ENCODE measurements at regions of chr1 and their contacts with region 1.

Region 1: DNA sequence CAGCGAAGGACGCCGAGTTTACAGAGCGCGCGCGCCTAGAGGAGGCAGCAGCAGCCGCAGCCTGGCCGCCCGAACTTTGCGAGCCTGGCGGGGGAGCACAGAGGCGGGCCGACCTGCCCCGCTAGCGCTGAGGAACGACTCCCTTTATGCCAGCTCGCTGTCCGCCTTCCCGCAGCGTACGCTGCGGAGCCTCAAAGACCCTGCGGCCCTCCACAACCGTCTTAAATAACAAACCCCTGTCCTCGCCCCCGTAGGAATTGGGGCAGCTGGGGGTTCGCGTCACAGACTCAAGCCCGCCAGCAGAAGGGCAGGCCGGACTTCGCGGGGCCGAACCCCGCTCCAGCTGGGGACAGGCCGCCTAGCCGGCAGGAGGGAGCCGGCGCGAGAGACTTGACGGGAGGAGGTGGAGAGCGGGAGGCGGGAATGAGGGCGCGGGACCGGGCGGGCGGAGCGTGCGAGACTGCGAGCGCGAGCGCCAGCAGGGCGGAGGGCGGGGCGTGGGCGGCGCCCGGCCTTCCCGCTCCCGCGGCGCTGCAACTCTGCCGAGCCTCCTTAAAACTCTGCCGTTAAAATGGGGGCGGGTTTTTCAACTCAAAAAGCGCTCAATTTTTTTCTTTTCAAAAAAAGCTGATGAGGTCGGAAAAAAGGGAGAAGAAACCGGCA is 1.8 kb upstream of the CDKN2C start:
- DNase-seq: peak; percentile 94
- H3K4me3 ChIP-seq: peak overlapping the region; percentile 62 to 90 (median 73)
- H3K27ac ChIP-seq: peak overlapping the region; percentile 66
- H3K4me1 ChIP-seq: peaks cover 26% of the 10 kb centered on the region
- H3K27me3 ChIP-seq: no peaks in the 10 kb centered on the region
- CTCF ChIP-seq: peak; percentile 30 to 53
- POLR2A ChIP-seq: peak; percentile 47

Region 2: GRCh38 chr1:50873458-50874187 is 94.7 kb before region 1 on chr1:
- CTCF ChIA-PET with region 1: interaction called, 4 read pairs
- POLR2A ChIA-PET with region 1: no interaction called
- dilution Hi-C with region 1: no loop called
- intact Hi-C with region 1: loop called (anchors 2 kb)
- DNase-seq: peak; percentile 74
- H3K4me3 ChIP-seq: no peak overlapping the region
- H3K27ac ChIP-seq: no peak overlapping the region
- H3K4me1 ChIP-seq: no peaks in the 10 kb centered on the region
- H3K27me3 ChIP-seq: no peaks in the 10 kb centered on the region
- CTCF ChIP-seq: peak; percentile 60 to 63
- POLR2A ChIP-seq: no peak

Region 3: DNA sequence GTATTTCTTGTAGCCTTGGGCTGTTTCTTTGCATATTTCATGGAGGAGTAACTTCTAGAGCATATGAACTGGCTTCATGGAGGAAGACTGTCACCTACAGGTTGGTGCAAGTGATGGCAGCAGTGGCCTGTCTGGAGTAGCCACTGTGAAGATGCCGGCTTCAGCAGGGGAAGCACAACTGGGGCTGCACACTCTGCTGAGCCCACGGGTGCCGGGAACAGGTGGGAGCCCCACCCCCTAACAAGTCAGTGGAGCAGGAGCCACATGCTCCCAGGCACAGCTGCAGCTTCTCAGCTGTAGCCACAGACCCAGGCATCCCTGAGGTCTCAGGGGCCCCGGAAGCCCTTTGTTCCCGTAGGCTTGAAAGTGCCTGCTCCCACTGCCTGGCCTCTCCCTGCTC is 90.6 kb after region 1 on chr1:
- CTCF ChIA-PET with region 1: interaction called, 3 read pairs
- POLR2A ChIA-PET with region 1: no interaction called
- dilution Hi-C with region 1: no loop called
- intact Hi-C with region 1: loop called (anchors 1 kb)
- DNase-seq: peak; percentile 9
- H3K4me3 ChIP-seq: no peak overlapping the region
- H3K27ac ChIP-seq: no peak overlapping the region
- H3K4me1 ChIP-seq: peaks cover 17% of the 10 kb centered on the region
- H3K27me3 ChIP-seq: peaks cover 0 to 2% of the 10 kb centered on the region in 2 experiments
- CTCF ChIP-seq: peak; percentile 21 to 55
- POLR2A ChIP-seq: no peak

Measured in endothelial cell of umbilical vein (primary cell).